Activated B cell treated with CpG ODN at 0.5 μM for 24 hours (primary cell): ENCODE measurements at regions of chr2 and their contacts with region 1.

Region 1: DNA sequence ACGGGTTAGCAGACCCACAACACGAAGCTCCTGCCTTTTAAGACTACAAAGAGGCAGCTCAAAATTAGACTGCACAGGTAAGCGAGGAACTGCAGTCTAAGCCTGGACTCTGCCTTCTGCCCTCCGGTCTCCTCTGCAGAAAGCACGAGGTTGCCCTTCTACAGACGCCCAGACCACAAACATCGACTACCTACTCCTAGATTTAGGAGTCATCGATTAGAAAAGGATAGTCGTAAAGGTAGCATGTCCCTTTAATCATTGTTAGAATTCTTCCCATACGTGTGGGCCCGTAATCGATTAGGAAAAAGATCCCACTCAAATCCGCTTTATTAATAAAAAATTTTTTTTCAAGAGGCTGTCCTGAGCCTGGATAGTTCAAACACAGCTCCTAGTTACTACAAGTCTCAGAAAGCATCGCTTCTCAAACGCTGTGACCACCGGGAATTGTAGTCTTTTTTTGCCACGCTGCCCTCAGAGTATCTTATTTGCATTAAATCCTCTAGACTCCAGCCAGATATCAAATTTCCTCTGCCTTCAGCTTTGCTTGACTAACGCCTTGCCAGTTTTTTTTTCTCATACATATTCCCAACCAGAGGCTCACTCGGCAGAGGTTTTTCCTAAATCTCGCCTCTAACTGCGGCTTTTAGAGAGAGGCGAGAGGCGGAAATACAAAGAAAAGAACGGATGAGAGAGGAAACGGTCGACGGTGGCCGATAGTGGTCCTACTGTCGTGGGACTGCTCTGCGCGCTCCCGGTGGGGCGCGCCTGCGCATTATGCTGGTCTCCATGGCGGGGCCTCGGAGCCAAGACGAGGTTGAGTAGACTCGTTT is at the starts of genes CARF and WDR12:
- DNase-seq: peak; percentile 82
- ATAC-seq: peak; percentile 85
- H3K4me3 Mint-ChIP-seq: peak within 1 kb of the TSS; percentile 97
- H3K27ac Mint-ChIP-seq: peak within 1 kb of the TSS; percentile 100
- H3K4me1 Mint-ChIP-seq: peaks cover 29% of the 10 kb centered on the region
- H3K27me3 Mint-ChIP-seq: no peaks in the 10 kb centered on the region
- CTCF ChIP-seq: no peak
- total RNA-seq, gene CARF: 10.6 and 12.0 TPM in 2 replicates
- total RNA-seq, gene WDR12: 57.5 and 63.1 TPM in 2 replicates

Region 2: DNA sequence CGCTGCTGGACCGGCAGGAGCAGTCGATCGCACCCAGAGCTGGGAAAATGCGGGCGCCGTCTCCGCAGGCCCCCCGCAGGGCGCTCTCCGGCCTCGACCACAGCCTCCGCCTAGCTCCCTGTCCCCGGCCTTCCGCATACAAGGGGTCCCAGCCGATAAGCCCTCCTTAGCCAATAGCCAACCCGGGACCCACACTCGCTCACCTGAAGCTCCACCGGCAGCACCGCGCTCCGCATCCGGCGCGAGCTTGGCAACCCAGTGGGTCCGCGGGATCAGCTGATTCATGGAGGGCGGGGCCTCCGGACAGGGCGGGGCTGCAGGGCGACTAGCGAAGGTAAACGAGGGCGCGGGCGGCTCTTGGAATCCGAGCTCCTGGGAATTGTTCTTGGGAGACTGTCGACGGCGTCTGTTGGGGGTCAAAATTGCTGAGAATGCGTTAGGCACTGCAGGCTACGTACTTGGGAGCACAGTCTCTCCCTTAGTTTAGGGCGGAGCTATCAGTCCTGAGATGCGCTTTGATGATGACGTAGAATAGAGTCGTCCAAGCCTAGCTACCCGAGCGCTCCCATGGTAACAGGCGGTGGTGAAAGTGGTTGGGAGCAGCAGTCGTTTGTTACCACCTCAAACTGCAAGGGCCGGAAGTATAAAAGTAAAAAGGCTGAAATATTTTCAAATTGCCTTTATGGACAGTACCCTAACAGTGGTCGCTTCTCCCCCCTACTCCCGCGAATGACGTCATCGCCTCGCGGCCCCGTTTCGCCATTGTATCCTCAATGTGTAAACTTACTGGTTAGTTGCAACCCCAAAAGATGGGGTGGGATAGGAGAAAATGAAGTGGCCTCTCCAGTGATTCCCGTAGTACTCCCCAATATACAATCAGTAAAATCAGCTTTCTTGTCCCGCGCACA is 1130.8 kb before region 1 on chr2 and contains the start of gene ALS2:
- CTCF ChIA-PET with region 1: no interaction called
- POLR2A ChIA-PET with region 1: interaction called, 3 read pairs
- intact Hi-C with region 1: loop called (anchors 1 kb)
- DNase-seq: peak; percentile 95
- ATAC-seq: peak; percentile 90
- H3K4me3 Mint-ChIP-seq: peak within 1 kb of the TSS; percentile 96
- H3K27ac Mint-ChIP-seq: peak within 1 kb of the TSS; percentile 95
- H3K4me1 Mint-ChIP-seq: peaks cover 17% of the 10 kb centered on the region
- H3K27me3 Mint-ChIP-seq: peaks cover 8% of the 10 kb centered on the region
- CTCF ChIP-seq: no peak
- total RNA-seq, gene ALS2: 11.6 and 14.2 TPM in 2 replicates

Region 3: DNA sequence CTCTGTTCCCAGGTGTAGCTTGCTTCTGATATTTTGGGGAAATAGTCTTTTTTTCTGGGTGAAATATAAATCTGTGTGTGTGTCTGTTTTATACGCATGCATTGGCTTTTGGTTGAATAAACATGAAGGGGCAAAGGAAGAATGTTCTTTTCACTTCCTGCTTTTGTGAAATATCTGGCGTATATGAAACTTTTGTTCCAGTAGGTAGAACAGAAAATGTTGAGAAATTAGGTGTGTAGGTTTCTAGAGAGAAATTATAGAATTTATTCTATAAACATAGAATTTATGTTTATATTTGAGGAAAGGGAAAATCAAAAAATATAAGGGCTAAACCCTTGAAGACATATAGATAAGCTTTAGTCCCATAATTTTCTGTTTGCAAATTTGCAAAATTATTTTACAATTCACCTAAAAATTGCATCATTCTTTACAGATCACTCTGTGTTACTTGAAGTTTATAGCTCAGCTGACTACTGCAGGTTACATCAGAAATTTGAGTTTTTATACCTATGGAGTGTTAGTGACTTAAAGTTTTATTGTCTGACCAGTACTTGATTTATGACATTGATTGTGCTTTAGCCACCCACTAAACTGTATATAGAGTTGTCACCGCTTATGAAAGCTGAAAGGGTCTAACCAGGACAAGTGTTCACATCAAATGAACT is 160.8 kb before region 1 on chr2:
- CTCF ChIA-PET with region 1: no interaction called
- POLR2A ChIA-PET with region 1: interaction called, 3 read pairs
- intact Hi-C with region 1: loop called (anchors 5 kb)
- DNase-seq: no peak
- ATAC-seq: peak; percentile 85
- H3K4me3 Mint-ChIP-seq: peak overlapping the region; percentile 54
- H3K27ac Mint-ChIP-seq: peak overlapping the region; percentile 92
- H3K4me1 Mint-ChIP-seq: peaks cover 51% of the 10 kb centered on the region
- H3K27me3 Mint-ChIP-seq: no peaks in the 10 kb centered on the region
- CTCF ChIP-seq: no peak

Region 4: GRCh38 chr2:202870431-202871299 is 41.1 kb before region 1 on chr2:
- CTCF ChIA-PET with region 1: interaction called, 4 read pairs
- POLR2A ChIA-PET with region 1: interaction called, 15 read pairs
- intact Hi-C with region 1: loop called (anchors 1 kb)
- DNase-seq: peak; percentile 53
- ATAC-seq: peak; percentile 81
- H3K4me3 Mint-ChIP-seq: peak overlapping the region; percentile 92
- H3K27ac Mint-ChIP-seq: peak overlapping the region; percentile 81
- H3K4me1 Mint-ChIP-seq: peaks cover 5% of the 10 kb centered on the region
- H3K27me3 Mint-ChIP-seq: no peaks in the 10 kb centered on the region
- CTCF ChIP-seq: peak; percentile 12

Region 5: GRCh38 chr2:203014456-203015199 is 102.9 kb after region 1 on chr2 and contains the start of gene NBEAL1:
- CTCF ChIA-PET with region 1: no interaction called
- POLR2A ChIA-PET with region 1: interaction called, 3 read pairs
- intact Hi-C with region 1: loop called (anchors 1 kb)
- DNase-seq: peak; percentile 100
- ATAC-seq: peak; percentile 93
- H3K4me3 Mint-ChIP-seq: peak within 1 kb of the TSS; percentile 87
- H3K27ac Mint-ChIP-seq: peak within 1 kb of the TSS; percentile 84
- H3K4me1 Mint-ChIP-seq: peaks cover 26% of the 10 kb centered on the region
- H3K27me3 Mint-ChIP-seq: no peaks in the 10 kb centered on the region
- CTCF ChIP-seq: no peak
- total RNA-seq, gene NBEAL1: 8.9 and 9.3 TPM in 2 replicates